ENCODE measurements at regions of chrX and their contacts with region 1.

Region 1: GRCh38 chrX:153319295-153320046 is 2.1 kb downstream of the PNMA6F start:
- DNase-seq: no peak
- H3K4me3 Mint-ChIP-seq: no peak overlapping the region
- H3K27ac Mint-ChIP-seq: no peak overlapping the region
- H3K4me1 Mint-ChIP-seq: peaks cover 6% of the 10 kb centered on the region
- H3K27me3 Mint-ChIP-seq: no peaks in the 10 kb centered on the region

Region 2: GRCh38 chrX:153061732-153062131 is 257.7 kb before region 1 on chrX:
- CTCF ChIA-PET with region 1: no interaction called
- intact Hi-C with region 1: loop called (anchors 5 kb)
- DNase-seq: no peak
- H3K4me3 Mint-ChIP-seq: no peak overlapping the region
- H3K27ac Mint-ChIP-seq: no peak overlapping the region
- H3K4me1 Mint-ChIP-seq: no peaks in the 10 kb centered on the region
- H3K27me3 Mint-ChIP-seq: no peaks in the 10 kb centered on the region

Region 3: DNA sequence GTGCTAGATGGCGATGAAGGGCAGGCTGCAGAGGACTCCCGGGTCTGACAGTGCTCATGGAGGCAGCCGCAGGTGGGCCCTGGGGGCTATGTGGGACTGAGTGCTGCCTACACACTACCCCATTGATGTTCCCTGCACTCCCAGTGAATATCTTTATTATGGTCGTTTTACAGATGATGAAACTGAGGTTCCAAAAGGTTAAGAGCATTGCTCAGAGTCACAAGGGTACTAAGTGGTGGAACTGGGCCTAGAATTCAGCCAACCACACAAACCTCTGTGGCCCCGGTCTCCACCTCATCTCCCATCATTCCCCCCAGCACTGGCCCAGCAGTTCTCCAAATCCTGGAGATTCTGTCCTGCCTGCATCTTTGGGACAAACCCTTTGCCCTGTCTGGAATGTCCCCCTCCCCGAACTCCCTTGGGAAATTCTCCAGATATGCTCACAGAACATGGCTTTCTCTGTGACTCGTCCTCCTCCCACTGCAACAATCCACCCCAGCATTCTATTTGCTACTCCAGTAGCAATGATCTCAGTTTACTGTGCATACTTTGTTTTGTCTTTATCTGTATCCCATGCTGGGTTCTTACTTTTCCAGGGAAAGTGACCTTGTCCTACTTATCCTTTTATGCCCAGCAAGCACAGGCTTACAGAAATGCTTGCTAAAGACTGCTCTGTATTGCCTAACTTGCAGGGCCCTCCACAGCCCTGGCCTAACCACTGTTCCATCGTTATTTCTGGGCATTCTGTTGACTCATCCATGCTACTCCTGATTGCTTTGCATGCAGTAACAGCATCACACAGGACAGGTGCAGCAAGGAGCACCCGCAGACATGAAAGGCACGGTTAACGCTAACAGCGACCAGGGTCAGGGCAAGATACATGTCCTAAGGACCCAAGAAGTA is 11.9 kb before region 1 on chrX:
- CTCF ChIA-PET with region 1: no interaction called
- intact Hi-C with region 1: no loop called
- DNase-seq: no peak
- H3K4me3 Mint-ChIP-seq: no peak overlapping the region
- H3K27ac Mint-ChIP-seq: no peak overlapping the region
- H3K4me1 Mint-ChIP-seq: no peaks in the 10 kb centered on the region
- H3K27me3 Mint-ChIP-seq: no peaks in the 10 kb centered on the region